ENCODE measurements at regions of chr12 and their contacts with region 1.

Region 1: GRCh38 chr12:110826592-110827200 is 20.1 kb upstream of the CCDC63 start:
- DNase-seq: peak; percentile 88
- ATAC-seq: peak; percentile 93
- H3K4me3 Mint-ChIP-seq: peak overlapping the region; percentile 24
- H3K27ac Mint-ChIP-seq: no peak overlapping the region
- H3K4me1 Mint-ChIP-seq: peaks cover 9% of the 10 kb centered on the region
- H3K27me3 Mint-ChIP-seq: peaks cover 5% of the 10 kb centered on the region

Region 2: DNA sequence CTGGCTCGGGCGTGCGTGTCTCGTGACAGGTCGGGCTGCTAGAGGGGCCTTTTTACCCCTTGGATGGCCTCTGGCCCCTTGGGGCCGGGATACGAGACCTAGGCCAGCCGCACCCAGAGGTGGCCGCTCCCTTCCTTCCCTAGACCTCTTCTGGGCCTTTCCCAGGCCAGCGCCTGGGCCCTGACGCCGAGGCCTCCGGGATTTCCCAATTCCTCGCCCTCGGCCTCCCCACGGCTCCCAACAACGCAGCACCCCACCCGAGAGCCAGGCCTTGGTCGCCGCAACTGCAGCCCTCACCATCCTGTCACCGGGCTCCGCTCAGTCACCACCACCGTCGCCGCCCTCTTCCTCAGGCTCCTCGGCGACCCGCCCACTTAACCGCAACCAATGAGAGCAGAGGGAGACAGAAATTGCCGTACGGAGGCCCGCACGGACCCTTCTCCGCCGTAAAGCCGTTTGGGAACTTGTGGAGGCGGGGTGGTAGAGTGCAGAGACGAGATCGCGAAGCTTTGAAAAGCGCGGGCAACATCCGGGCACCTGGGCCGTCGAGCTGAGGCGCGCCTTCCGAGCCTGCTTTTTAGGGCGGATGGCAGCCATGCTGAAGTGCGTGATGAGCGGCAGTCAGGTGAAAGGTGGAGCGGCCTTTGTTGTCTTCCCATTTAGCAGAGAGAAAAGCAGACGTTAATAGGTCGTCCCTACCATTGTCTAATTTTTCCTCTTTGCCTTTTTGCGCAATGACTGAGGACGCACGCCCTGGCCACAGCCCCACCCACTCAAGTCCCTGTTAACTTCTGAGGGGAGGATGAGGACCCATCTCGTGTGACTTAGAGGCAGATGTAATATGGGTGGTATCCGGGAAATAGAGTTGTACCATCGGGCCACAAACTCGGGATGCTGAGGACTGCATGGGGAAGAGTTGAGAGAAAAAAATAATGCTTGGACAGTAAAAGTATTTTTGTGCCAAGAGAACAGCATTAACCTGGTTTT is 324.7 kb before region 1 on chr12 and contains the starts of genes RAD9B and VPS29:
- CTCF ChIA-PET with region 1: no interaction called
- POLR2A ChIA-PET with region 1: no interaction called
- DNase-seq: peak; percentile 100
- ATAC-seq: peak; percentile 98
- H3K4me3 Mint-ChIP-seq: peak within 1 kb of the TSS; percentile 97
- H3K27ac Mint-ChIP-seq: peak within 1 kb of the TSS; percentile 99
- H3K4me1 Mint-ChIP-seq: peaks cover 40% of the 10 kb centered on the region
- H3K27me3 Mint-ChIP-seq: no peaks in the 10 kb centered on the region
- total RNA-seq, gene RAD9B: 0.68 to 2.3 TPM
- total RNA-seq, gene VPS29: 126 to 128 TPM

Region 3: DNA sequence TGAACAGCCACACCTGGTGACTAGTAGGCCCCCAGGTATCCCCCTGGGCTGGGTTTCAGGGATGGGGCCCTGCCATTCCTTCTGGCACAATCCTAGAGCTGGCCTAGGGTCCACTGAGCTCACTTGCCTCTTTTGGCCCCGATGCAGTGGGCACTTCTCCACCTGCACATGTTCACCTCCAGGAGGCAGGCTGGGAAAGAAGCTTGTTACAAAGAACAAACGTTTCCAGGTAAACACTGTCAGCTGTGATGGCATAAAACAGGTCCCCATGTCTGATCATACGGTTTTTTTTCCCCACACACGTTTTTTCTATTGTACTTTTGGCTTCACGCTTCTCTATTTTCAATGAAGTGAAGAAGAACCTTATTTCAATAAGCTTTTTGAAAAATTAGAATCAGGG is 121.9 kb before region 1 on chr12:
- CTCF ChIA-PET with region 1: interaction called, 18 read pairs
- POLR2A ChIA-PET with region 1: interaction called, 3 read pairs
- DNase-seq: peak; percentile 35
- ATAC-seq: peak; percentile 42
- H3K4me3 Mint-ChIP-seq: no peak overlapping the region
- H3K27ac Mint-ChIP-seq: no peak overlapping the region
- H3K4me1 Mint-ChIP-seq: no peaks in the 10 kb centered on the region
- H3K27me3 Mint-ChIP-seq: no peaks in the 10 kb centered on the region

Measured in activated CD8-positive, alpha-beta T cell treated with anti-CD3 and anti-CD28 coated beads, Interleukin-2, amount 10 ng/mL, durations not matched to agents 7 days and 5 days (primary cell).